CD4-positive, alpha-beta memory T cell (primary cell): ENCODE measurements at regions of chr16 and their contacts with region 1.

Region 1: GRCh38 chr16:31868691-31869167 is 4.9 kb upstream of the ZNF267 start:
- DNase-seq: peak; percentile 74 to 85 (median 78)
- H3K4me3 ChIP-seq: peak overlapping the region; percentile 65 to 67
- H3K4me3 Mint-ChIP-seq: peak overlapping the region; percentile 71 to 84 (median 78)
- H3K27ac ChIP-seq: peak overlapping the region; percentile 71
- H3K27ac Mint-ChIP-seq: peak overlapping the region; percentile 74 to 96 (median 92)
- H3K4me1 ChIP-seq: peaks cover 44% of the 10 kb centered on the region
- H3K4me1 Mint-ChIP-seq: peaks cover 31 to 50% (median 38%) of the 10 kb centered on the region in 4 donors
- H3K27me3 ChIP-seq: no peaks in the 10 kb centered on the region
- H3K27me3 Mint-ChIP-seq: no peaks in the 10 kb centered on the region

Region 2: DNA sequence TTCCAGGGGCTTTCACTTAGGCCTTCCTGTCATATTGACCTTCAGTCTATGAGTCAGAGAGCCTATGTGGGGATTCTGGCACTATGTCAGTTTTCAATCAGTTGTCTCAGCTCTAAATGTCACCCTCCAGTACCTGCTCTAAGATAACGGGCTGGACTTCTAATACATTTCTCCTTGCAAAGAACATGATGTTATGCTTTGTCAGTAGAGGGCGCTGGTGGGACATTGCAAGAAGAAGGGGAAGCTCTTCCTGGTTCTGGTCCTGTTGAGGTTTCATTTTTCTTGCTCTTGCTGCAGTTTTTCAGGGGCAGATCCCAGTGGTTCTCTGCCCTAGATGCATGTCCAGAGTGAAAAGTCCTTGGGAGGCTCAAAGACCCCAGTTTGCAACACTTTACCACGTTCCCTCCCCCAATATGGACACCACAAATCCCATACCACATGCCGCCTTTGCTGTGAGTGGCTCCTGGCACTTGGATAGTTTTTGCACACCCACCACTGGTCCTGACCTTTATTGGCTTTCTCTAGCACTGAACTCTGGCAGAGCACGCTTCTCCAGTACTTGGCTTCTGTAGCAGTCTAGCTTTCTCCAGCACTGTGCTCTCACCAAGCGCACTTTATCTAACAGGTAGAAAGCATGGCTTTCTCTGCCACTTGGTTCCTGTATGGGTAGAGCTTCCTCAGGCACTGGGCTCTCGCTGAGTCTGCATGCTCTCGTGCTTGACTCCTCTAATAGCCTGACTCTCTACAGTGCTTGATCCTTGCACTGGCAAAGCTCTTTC is 1023.9 kb before region 1 on chr16:
- CTCF ChIA-PET with region 1: interaction called, 11 read pairs
- POLR2A ChIA-PET with region 1: no interaction called
- intact Hi-C with region 1: loop called (anchors 10 kb)
- DNase-seq: peak; percentile 82 to 88 (median 85)
- H3K4me3 ChIP-seq: peak overlapping the region in 1 of 2 donors; percentile 0
- H3K4me3 Mint-ChIP-seq: peak overlapping the region; percentile 31 to 72 (median 58)
- H3K27ac ChIP-seq: no peak overlapping the region
- H3K27ac Mint-ChIP-seq: peak overlapping the region in 6 of 7 donors; percentile 6 to 81 (median 74)
- H3K4me1 ChIP-seq: peaks cover 6% of the 10 kb centered on the region
- H3K4me1 Mint-ChIP-seq: peaks cover 6 to 11% (median 10%) of the 10 kb centered on the region in 4 donors
- H3K27me3 ChIP-seq: no peaks in the 10 kb centered on the region
- H3K27me3 Mint-ChIP-seq: no peaks in the 10 kb centered on the region

Region 3: DNA sequence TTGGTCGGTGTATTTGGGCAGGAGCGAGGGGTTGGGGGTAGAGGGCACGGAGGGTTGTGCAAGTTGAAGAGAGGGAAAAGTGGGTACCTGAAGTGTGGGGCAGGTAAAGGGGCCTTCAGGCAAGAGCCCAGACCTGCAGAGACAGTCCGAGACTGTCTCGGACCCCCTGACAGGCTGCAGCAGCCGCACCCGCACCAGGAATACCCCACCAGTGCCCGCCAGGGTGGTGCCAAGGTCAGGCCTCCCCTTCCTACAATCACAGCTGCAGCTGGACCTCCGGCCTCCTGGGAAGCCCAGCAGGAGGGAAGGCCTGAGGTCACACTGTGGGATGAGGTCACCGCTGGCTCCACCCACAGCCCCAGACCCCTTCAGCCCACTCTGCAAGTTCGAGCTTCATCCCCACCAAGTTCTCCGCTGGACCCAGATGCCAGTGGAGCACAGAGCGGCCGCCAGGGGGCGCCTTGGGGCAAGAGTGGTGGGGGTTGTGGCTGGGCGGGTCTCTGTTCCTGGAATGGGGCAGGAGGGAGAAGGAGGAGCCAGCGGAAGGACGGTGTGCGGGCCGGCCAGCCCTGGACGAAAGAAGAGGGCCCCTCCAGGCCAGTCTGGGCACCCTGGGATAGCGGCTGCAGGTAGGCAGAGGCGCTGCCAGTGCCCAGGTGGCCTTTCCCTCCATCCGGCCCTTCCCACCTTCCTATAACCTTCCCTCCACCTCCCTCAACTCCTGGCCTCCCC is 883.9 kb before region 1 on chr16 and contains the start of gene HSD3B7:
- CTCF ChIA-PET with region 1: interaction called, 29 read pairs
- POLR2A ChIA-PET with region 1: interaction called, 3 read pairs
- intact Hi-C with region 1: no loop called
- DNase-seq: peak; percentile 60 to 76 (median 65)
- H3K4me3 ChIP-seq: no peak within 1 kb of the TSS
- H3K4me3 Mint-ChIP-seq: no peak within 1 kb of the TSS
- H3K27ac ChIP-seq: no peak within 1 kb of the TSS
- H3K27ac Mint-ChIP-seq: peak within 1 kb of the TSS in 2 of 7 donors; percentile 63 to 66
- H3K4me1 ChIP-seq: peaks cover 6% of the 10 kb centered on the region
- H3K4me1 Mint-ChIP-seq: peaks cover 0 to 6% (median 0%) of the 10 kb centered on the region in 4 donors
- H3K27me3 ChIP-seq: no peaks in the 10 kb centered on the region
- H3K27me3 Mint-ChIP-seq: no peaks in the 10 kb centered on the region
- total RNA-seq, gene HSD3B7: 3.6 to 4.3 TPM

Region 4: GRCh38 chr16:31044190-31044481 is 824.6 kb before region 1 on chr16:
- CTCF ChIA-PET with region 1: no interaction called
- POLR2A ChIA-PET with region 1: no interaction called
- intact Hi-C with region 1: no loop called
- DNase-seq: no peak
- H3K4me3 ChIP-seq: no peak overlapping the region
- H3K4me3 Mint-ChIP-seq: no peak overlapping the region
- H3K27ac ChIP-seq: no peak overlapping the region
- H3K27ac Mint-ChIP-seq: no peak overlapping the region
- H3K4me1 ChIP-seq: no peaks in the 10 kb centered on the region
- H3K4me1 Mint-ChIP-seq: peaks cover 0 to 2% (median under 1%) of the 10 kb centered on the region in 4 donors
- H3K27me3 ChIP-seq: no peaks in the 10 kb centered on the region
- H3K27me3 Mint-ChIP-seq: no peaks in the 10 kb centered on the region

Region 5: GRCh38 chr16:31073968-31074813 is 794.5 kb before region 1 on chr16 and contains the starts of genes ZNF646 and ZNF668:
- CTCF ChIA-PET with region 1: no interaction called
- POLR2A ChIA-PET with region 1: interaction called, 8 read pairs
- intact Hi-C with region 1: loop called (anchors 1 kb)
- DNase-seq: peak; percentile 94 to 99 (median 98)
- H3K4me3 ChIP-seq: peak within 1 kb of the TSS; percentile 81 to 86
- H3K4me3 Mint-ChIP-seq: peak within 1 kb of the TSS; percentile 92 to 99 (median 97)
- H3K27ac ChIP-seq: peak within 1 kb of the TSS; percentile 87
- H3K27ac Mint-ChIP-seq: peak within 1 kb of the TSS; percentile 93 to 99 (median 98)
- H3K4me1 ChIP-seq: peaks cover 27% of the 10 kb centered on the region
- H3K4me1 Mint-ChIP-seq: peaks cover 20 to 58% (median 30%) of the 10 kb centered on the region in 4 donors
- H3K27me3 ChIP-seq: no peaks in the 10 kb centered on the region
- H3K27me3 Mint-ChIP-seq: peaks cover 0 to 2% of the 10 kb centered on the region in 2 donors
- total RNA-seq, gene ZNF646: 46.9 to 47.0 TPM
- total RNA-seq, gene ZNF668: 11.7 to 13.6 TPM

Region 6: DNA sequence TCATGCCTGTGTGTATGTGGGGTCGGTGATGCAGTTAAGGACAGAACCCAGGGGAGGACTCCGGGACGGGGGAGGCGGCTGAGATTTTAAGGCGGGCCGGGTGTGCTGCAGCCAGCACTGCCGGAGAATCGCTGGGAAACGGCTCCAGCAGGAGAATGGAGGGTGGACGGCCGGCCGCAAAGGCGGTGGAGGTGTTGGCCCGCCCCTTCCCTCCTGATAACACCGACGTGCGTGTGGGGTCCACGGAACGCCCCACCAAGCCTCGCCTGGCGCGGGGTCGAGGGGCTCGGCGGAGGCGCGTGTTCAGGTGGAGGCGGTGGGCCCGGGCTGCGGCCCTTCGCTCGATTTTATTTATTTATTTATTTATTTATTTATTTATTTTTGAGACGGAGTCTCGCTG is 426.8 kb before region 1 on chr16:
- CTCF ChIA-PET with region 1: interaction called, 14 read pairs
- POLR2A ChIA-PET with region 1: interaction called, 3 read pairs
- intact Hi-C with region 1: no loop called
- DNase-seq: no peak
- H3K4me3 ChIP-seq: no peak overlapping the region
- H3K4me3 Mint-ChIP-seq: peak overlapping the region; percentile 75 to 91 (median 84)
- H3K27ac ChIP-seq: no peak overlapping the region
- H3K27ac Mint-ChIP-seq: peak overlapping the region in 2 of 7 donors; percentile 3 to 73
- H3K4me1 ChIP-seq: no peaks in the 10 kb centered on the region
- H3K4me1 Mint-ChIP-seq: peaks cover 1 to 9% (median 6%) of the 10 kb centered on the region in 4 donors
- H3K27me3 ChIP-seq: no peaks in the 10 kb centered on the region
- H3K27me3 Mint-ChIP-seq: peaks cover 0 to 1% of the 10 kb centered on the region in 2 donors

Region 7: GRCh38 chr16:31700526-31701388 is 168.0 kb before region 1 on chr16:
- CTCF ChIA-PET with region 1: interaction called, 19 read pairs
- POLR2A ChIA-PET with region 1: interaction called, 8 read pairs
- intact Hi-C with region 1: loop called (anchors 2 kb)
- DNase-seq: peak; percentile 74 to 86 (median 81)
- H3K4me3 ChIP-seq: peak overlapping the region; percentile 61 to 70
- H3K4me3 Mint-ChIP-seq: peak overlapping the region; percentile 88 to 98 (median 92)
- H3K27ac ChIP-seq: peak overlapping the region; percentile 94
- H3K27ac Mint-ChIP-seq: peak overlapping the region; percentile 94 to 99 (median 96)
- H3K4me1 ChIP-seq: peaks cover 28% of the 10 kb centered on the region
- H3K4me1 Mint-ChIP-seq: peaks cover 25 to 33% (median 30%) of the 10 kb centered on the region in 4 donors
- H3K27me3 ChIP-seq: no peaks in the 10 kb centered on the region
- H3K27me3 Mint-ChIP-seq: no peaks in the 10 kb centered on the region

Region 8: DNA sequence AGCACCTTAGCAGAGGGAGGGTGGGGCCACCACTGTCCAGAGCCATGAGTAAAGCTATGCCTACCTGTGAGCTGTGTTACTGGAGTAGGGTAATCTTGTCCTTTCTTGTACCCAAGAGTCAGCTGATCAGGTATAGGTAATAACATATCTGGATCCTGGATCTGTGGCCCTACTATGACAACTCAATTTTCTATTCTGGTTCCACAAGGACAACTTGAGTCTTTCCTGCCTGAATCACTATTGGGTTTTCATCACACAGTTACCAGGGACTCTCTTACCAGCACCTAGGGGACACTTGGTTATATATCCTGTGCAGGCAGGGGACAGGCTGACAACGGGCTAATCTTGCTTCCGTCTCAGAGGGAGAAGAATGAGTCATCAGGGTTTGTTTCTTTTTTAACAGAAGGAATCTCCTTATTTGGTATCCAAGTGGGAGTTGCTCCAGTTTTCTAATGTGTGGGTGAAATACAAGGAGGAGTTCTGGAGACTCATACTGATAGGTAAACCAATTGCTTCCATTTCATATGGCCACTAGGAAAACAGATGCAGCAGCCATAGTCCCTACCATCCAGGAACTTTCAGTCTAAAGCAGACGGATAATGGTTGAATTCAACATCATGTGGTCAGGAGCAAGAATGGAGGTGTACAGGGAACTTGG is 11.7 kb after region 1 on chr16:
- CTCF ChIA-PET with region 1: interaction called, 15 read pairs
- POLR2A ChIA-PET with region 1: interaction called, 19 read pairs
- intact Hi-C with region 1: loop called (anchors 1 kb)
- DNase-seq: peak in 3 of 5 donors; percentile 25 to 76 (median 32)
- H3K4me3 ChIP-seq: no peak overlapping the region
- H3K4me3 Mint-ChIP-seq: peak overlapping the region in 7 of 8 donors; percentile 34 to 73 (median 53)
- H3K27ac ChIP-seq: peak overlapping the region; percentile 97
- H3K27ac Mint-ChIP-seq: peak overlapping the region; percentile 79 to 95 (median 88)
- H3K4me1 ChIP-seq: peaks cover 79% of the 10 kb centered on the region
- H3K4me1 Mint-ChIP-seq: peaks cover 64 to 84% (median 73%) of the 10 kb centered on the region in 4 donors
- H3K27me3 ChIP-seq: no peaks in the 10 kb centered on the region
- H3K27me3 Mint-ChIP-seq: no peaks in the 10 kb centered on the region